ENCODE measurements at regions of chr17 and their contacts with region 1.

Region 1: GRCh38 chr17:979538-980405 is at the start of gene NXN:
- DNase-seq: peak; percentile 85 to 94
- ATAC-seq: peak; percentile 81 to 97 (median 94)
- H3K4me3 ChIP-seq: peak within 1 kb of the TSS; percentile 49 to 94 (median 81)
- H3K27ac ChIP-seq: peak within 1 kb of the TSS; percentile 43 to 84 (median 80)
- H3K4me1 ChIP-seq: peaks cover 4 to 52% (median 37%) of the 10 kb centered on the region in 9 donors
- H3K27me3 ChIP-seq: peaks cover 0 to 25% (median 0%) of the 10 kb centered on the region in 7 donors
- CTCF ChIP-seq: peak in 5 of 9 donors; percentile 16 to 53 (median 38)
- total RNA-seq, gene NXN: 11.6 to 24.4 (median 15.9) TPM

Region 2: GRCh38 chr17:409848-410545 is 569.8 kb before region 1 on chr17:
- intact Hi-C with region 1: loop called in 1 of 10 experiments (anchors 5 kb)
- DNase-seq: peak; percentile 99 to 100
- ATAC-seq: peak; percentile 93 to 98 (median 95)
- H3K4me3 ChIP-seq: peak overlapping the region; percentile 61 to 92 (median 83)
- H3K27ac ChIP-seq: peak overlapping the region; percentile 53 to 94 (median 72)
- H3K4me1 ChIP-seq: peaks cover 4 to 34% (median 23%) of the 10 kb centered on the region in 9 donors
- H3K27me3 ChIP-seq: no peaks in the 10 kb centered on the region
- CTCF ChIP-seq: peak in 1 of 9 donors; percentile 14

Region 3: GRCh38 chr17:794876-795275 is 184.9 kb before region 1 on chr17:
- intact Hi-C with region 1: loop called (anchors 1 to 5 kb)
- DNase-seq: peak; percentile 88 to 89
- ATAC-seq: peak; percentile 40 to 90 (median 78)
- H3K4me3 ChIP-seq: peak overlapping the region in 9 of 10 donors; percentile 27 to 53 (median 43)
- H3K27ac ChIP-seq: peak overlapping the region in 9 of 10 donors; percentile 25 to 71 (median 55)
- H3K4me1 ChIP-seq: peaks cover 0 to 36% (median 15%) of the 10 kb centered on the region in 9 donors
- H3K27me3 ChIP-seq: no peaks in the 10 kb centered on the region
- CTCF ChIP-seq: peak; percentile 85 to 97 (median 86)

Region 4: GRCh38 chr17:903981-904481 is 75.7 kb before region 1 on chr17:
- intact Hi-C with region 1: loop called in 1 of 10 experiments (anchors 5 kb)
- DNase-seq: no peak
- ATAC-seq: no peak
- H3K4me3 ChIP-seq: no peak overlapping the region
- H3K27ac ChIP-seq: peak overlapping the region in 1 of 10 donors; percentile 40
- H3K4me1 ChIP-seq: peaks cover 5 to 36% (median 23%) of the 10 kb centered on the region in 9 donors
- H3K27me3 ChIP-seq: peaks cover 0 to 23% (median 0%) of the 10 kb centered on the region in 7 donors
- CTCF ChIP-seq: no peak

Region 5: DNA sequence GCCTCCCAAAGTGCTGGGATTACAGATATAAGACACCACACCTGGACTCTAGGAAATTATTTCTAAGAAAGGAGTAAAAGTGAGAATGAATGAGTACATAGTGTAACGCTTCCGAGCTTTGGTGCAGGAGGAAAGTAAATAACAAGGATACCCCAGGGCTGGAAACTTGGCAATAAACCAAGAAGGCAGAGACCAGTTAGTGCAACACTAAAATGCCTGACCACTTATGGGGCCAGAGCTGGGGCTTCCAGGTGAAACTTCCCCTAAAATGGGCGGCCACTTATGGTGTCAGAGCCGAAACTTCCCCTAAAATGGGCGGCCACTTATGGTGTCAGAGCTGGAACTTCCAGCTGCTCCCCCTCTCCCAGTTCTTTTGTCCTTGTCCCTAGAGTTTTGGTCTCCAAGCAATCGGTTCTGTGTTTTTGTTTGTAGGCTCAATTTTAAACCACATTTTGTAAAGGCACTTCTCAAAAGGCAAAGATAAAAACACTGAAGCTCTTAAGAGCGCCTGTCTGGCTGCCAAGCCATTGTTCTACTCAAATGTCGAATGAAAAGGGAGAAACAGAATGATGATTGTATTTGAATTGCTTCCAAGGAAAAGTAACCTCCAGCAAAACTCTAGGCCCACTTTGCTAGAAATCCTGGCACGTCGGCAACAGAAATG is 64.1 kb before region 1 on chr17:
- intact Hi-C with region 1: loop called in 2 of 10 experiments (anchors 5 kb)
- DNase-seq: peak; percentile 30 to 75
- ATAC-seq: peak; percentile 66 to 88 (median 82)
- H3K4me3 ChIP-seq: peak overlapping the region in 4 of 10 donors; percentile 20 to 32 (median 27)
- H3K27ac ChIP-seq: peak overlapping the region; percentile 39 to 89 (median 80)
- H3K4me1 ChIP-seq: peaks cover 2 to 50% (median 24%) of the 10 kb centered on the region in 9 donors
- H3K27me3 ChIP-seq: no peaks in the 10 kb centered on the region
- CTCF ChIP-seq: no peak

Region 6: GRCh38 chr17:933312-934083 is 46.3 kb before region 1 on chr17:
- intact Hi-C with region 1: loop called in 1 of 10 experiments (anchors 5 kb)
- DNase-seq: no peak
- ATAC-seq: peak in 7 of 8 donors; percentile 21 to 81 (median 62)
- H3K4me3 ChIP-seq: peak overlapping the region in 2 of 10 donors; percentile 6 to 11
- H3K27ac ChIP-seq: peak overlapping the region in 6 of 10 donors; percentile 1 to 43 (median 30)
- H3K4me1 ChIP-seq: peaks cover 5 to 30% (median 15%) of the 10 kb centered on the region in 9 donors
- H3K27me3 ChIP-seq: no peaks in the 10 kb centered on the region
- CTCF ChIP-seq: no peak

Region 7: DNA sequence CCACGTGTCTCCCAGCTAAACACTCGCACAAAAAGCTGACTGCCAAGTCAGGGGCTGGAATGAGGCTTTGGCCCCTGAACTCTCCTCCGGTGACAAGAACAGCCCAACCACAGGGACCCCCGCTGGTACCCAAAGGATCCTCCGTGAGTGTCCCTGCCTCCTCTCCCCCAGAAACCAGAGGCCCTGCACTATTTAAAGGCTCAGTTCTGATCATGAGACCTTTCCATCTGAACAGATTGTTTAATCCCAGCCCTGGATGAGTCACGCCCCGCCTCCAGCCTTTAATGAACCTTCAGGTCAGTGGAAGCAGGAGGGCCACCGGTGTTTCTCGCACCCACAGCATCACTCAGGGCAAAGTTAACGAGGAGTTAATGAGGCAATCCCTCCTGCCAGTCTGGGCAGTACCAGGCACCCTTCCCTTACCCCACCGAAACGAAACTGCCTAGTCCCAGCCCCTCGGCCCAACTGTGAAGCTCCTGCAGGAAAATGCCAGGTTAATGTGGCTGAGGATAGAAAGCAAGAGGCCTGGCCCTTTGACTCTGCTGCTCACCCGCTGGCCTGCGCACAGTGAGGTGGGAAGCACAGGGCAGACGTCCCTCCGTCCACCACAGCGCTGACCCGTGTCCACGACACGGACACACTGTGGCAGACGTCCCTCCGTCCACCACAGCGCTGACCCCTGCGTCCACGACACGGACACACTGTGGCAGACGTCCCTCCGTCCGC is 49.6 kb after region 1 on chr17:
- intact Hi-C with region 1: no loop called
- DNase-seq: no peak
- ATAC-seq: peak in 6 of 8 donors; percentile 7 to 63 (median 48)
- H3K4me3 ChIP-seq: peak overlapping the region in 5 of 10 donors; percentile 54 to 59 (median 57)
- H3K27ac ChIP-seq: peak overlapping the region in 9 of 10 donors; percentile 59 to 85 (median 76)
- H3K4me1 ChIP-seq: peaks cover 37 to 81% (median 63%) of the 10 kb centered on the region in 9 donors
- H3K27me3 ChIP-seq: no peaks in the 10 kb centered on the region
- CTCF ChIP-seq: no peak